PC-3 (cell line): ENCODE measurements at regions of chr3 and their contacts with region 1.

Region 1: DNA sequence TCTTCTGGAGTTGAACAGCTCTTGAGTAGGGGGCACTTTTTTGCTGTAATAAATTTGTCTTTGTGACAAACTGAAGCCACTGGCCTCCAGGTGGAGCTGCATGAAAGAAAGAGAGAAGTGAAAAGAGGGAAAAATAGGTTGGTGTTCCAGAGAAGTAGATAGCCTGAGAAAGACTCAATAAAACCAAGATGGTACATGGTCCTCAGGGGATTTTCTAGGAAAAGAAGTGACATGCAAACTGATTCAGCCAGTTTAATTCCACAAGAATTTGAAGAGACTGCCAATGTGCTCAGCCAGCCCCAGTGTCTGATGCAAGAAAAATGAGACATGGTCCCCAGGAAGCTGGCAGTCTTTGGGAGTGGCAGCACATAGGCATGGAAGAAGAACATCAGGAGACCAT is 152.7 kb downstream of the CD47 start:
- DNase-seq: peak; percentile 79
- ATAC-seq: peak; percentile 21
- H3K4me3 ChIP-seq: no peak overlapping the region
- H3K27ac ChIP-seq: no peak overlapping the region
- H3K4me1 ChIP-seq: peaks cover 21% of the 10 kb centered on the region
- H3K27me3 ChIP-seq: no peaks in the 10 kb centered on the region
- CTCF ChIP-seq: peak; percentile 90

Region 2: DNA sequence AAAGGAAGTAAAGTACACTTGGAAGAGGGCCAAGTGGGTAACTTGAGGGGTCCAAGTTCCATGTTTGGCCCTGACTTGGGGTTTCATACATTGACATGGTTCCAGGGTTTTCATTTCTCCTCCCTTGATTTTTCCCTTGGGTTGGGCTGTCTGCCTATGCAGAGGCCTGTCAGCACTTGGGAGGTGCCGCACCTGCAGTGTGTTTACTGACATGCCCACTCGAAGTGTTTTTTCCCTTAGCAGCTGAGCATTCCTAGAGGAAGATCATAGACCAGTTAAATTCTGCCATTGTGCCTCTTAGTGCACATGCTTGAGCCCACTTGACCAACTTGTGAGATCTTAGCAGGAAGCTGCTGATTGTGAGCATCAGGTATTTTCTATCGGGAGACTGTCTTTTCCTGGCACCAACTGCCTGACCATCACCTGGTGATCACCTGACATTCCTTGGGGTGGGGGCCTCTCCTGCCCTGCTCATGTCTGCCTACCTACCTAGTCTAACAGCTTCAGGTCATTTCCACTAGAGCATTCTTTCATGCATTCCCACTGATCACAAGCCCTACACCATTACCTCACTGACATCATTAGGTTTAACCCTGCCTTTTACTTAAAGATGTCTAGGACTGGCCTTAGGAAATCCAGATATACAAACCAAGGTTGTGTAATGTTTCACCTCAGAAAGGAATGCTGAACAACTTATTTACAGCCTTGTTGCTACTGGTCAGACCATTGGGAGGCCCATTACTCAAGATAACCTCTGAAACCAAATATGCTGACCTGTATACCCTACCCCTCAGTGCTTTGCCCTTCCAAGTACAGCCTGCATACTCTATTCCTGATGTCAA is 84.3 kb after region 1 on chr3:
- CTCF ChIA-PET with region 1: no interaction called
- POLR2A ChIA-PET with region 1: no interaction called
- intact Hi-C with region 1: loop called (anchors 1 kb)
- DNase-seq: no peak
- ATAC-seq: no peak
- H3K4me3 ChIP-seq: no peak overlapping the region
- H3K27ac ChIP-seq: no peak overlapping the region
- H3K4me1 ChIP-seq: peaks cover 13% of the 10 kb centered on the region
- H3K27me3 ChIP-seq: no peaks in the 10 kb centered on the region
- CTCF ChIP-seq: no peak

Region 3: DNA sequence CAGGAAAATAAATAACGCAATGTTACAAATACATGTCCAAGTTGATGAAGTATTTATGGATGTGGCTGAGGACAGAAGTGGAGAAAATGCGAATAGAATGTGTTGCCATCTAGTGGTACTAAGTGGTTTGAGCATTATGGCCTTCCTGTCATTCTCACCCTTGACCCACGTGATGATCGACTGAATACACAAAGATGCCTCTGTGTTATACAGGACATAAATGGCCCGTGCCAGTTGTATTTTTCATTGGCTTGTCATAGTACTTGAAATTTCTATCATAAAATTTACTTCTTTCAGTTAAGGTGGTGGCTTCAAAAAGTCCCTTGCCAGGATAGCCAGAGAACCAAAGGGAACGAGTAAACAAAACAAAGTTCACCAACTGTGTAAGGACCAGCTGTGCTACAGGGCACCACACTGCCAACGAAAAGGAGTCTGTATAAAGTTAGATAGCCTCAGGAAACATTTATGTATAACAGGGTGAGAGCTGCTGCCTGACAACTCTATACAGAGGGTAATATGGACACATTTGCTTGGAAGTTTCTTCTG is 468.6 kb after region 1 on chr3:
- CTCF ChIA-PET with region 1: no interaction called
- POLR2A ChIA-PET with region 1: no interaction called
- intact Hi-C with region 1: loop called (anchors 2 kb)
- DNase-seq: peak; percentile 74
- ATAC-seq: peak; percentile 89
- H3K4me3 ChIP-seq: no peak overlapping the region
- H3K27ac ChIP-seq: no peak overlapping the region
- H3K4me1 ChIP-seq: peaks cover 9% of the 10 kb centered on the region
- H3K27me3 ChIP-seq: no peaks in the 10 kb centered on the region
- CTCF ChIP-seq: peak; percentile 80

Region 4: DNA sequence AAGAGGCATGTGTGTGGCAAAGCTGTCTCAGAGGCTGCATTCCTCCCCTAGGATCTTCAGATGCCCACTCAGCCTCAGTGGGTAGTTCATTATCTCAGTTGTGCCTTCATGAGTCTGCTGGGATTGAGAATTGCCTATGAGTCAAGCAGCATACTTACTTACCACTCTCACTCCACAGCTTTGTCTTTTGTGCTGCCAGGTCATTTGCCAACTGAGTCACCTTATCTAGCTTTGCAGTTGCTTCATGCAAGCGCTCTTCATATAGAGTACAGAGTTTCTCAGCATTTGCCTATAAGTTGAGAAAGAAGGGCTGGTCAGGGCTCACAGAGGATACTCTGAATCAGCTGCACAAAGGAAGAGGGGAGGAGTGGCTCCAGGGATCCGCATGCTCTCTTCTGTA is 482.8 kb after region 1 on chr3:
- CTCF ChIA-PET with region 1: no interaction called
- POLR2A ChIA-PET with region 1: no interaction called
- intact Hi-C with region 1: no loop called
- DNase-seq: peak; percentile 82
- ATAC-seq: peak; percentile 84
- H3K4me3 ChIP-seq: no peak overlapping the region
- H3K27ac ChIP-seq: no peak overlapping the region
- H3K4me1 ChIP-seq: peaks cover 6% of the 10 kb centered on the region; the same call in 1 of the 2 replicates
- H3K27me3 ChIP-seq: no peaks in the 10 kb centered on the region
- CTCF ChIP-seq: no peak

Region 5: GRCh38 chr3:108477511-108478147 is 539.5 kb after region 1 on chr3:
- CTCF ChIA-PET with region 1: no interaction called
- POLR2A ChIA-PET with region 1: no interaction called
- intact Hi-C with region 1: loop called (anchors 1 kb)
- DNase-seq: peak; percentile 78
- ATAC-seq: peak; percentile 58
- H3K4me3 ChIP-seq: no peak overlapping the region
- H3K27ac ChIP-seq: no peak overlapping the region
- H3K4me1 ChIP-seq: peaks cover 20% of the 10 kb centered on the region
- H3K27me3 ChIP-seq: no peaks in the 10 kb centered on the region
- CTCF ChIP-seq: peak; percentile 91

Region 6: GRCh38 chr3:108488631-108489030 is 550.5 kb after region 1 on chr3:
- CTCF ChIA-PET with region 1: no interaction called
- POLR2A ChIA-PET with region 1: no interaction called
- intact Hi-C with region 1: no loop called
- DNase-seq: peak; percentile 65
- ATAC-seq: peak; percentile 67
- H3K4me3 ChIP-seq: no peak overlapping the region
- H3K27ac ChIP-seq: no peak overlapping the region
- H3K4me1 ChIP-seq: peaks cover 16% of the 10 kb centered on the region
- H3K27me3 ChIP-seq: no peaks in the 10 kb centered on the region
- CTCF ChIP-seq: no peak